ENCODE measurements at regions of chr21 and their contacts with region 1.

Region 1: DNA sequence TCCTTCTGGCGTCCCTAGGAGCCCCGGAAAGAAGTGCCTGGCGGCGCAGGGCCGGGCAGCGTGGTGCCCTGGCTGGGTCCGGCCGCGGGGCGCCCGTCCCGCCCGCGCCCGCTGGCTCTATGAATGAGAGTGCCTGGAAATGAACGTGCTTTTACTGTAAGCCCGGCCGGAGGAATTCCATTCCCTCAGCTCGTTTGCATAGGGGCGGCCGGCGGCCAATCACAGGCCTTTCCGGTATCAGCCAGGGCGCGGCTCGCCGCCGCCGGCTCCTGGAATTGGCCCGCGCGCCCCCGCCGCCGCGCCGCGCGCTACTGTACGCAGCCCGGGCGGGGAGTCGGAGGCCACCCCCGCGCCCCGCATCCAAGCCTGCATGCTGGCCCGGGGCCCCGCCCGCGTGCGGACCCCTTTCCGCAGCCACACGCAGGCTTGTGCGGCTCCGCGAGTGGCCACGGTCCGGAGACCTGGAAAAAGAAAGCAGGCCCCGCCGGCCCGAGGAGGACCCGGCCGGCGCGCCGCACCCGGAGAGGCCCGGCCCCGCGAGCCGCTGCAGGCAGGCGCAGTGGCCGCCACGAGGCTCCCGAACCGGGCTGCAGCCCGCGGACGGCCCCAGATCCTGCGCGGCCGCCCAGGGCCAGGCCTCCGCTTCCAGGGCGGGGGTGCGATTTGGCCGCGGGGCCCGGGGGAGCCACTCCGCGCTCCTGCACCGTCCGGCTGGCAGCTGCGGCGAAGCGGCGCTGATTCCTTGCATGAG is 160.4 kb downstream of the RUNX1 start:
- DNase-seq: peak; percentile 65 to 83 (median 68)
- H3K4me3 ChIP-seq: peak overlapping the region; percentile 52 to 78
- H3K4me3 Mint-ChIP-seq: peak overlapping the region; percentile 90 to 99 (median 95)
- H3K27ac ChIP-seq: peak overlapping the region; percentile 75
- H3K27ac Mint-ChIP-seq: peak overlapping the region; percentile 93 to 100 (median 99)
- H3K4me1 ChIP-seq: peaks cover 69% of the 10 kb centered on the region
- H3K4me1 Mint-ChIP-seq: peaks cover 25 to 68% (median 44%) of the 10 kb centered on the region in 4 donors
- H3K27me3 ChIP-seq: no peaks in the 10 kb centered on the region
- H3K27me3 Mint-ChIP-seq: peaks cover 0 to 1% of the 10 kb centered on the region in 2 donors

Region 2: DNA sequence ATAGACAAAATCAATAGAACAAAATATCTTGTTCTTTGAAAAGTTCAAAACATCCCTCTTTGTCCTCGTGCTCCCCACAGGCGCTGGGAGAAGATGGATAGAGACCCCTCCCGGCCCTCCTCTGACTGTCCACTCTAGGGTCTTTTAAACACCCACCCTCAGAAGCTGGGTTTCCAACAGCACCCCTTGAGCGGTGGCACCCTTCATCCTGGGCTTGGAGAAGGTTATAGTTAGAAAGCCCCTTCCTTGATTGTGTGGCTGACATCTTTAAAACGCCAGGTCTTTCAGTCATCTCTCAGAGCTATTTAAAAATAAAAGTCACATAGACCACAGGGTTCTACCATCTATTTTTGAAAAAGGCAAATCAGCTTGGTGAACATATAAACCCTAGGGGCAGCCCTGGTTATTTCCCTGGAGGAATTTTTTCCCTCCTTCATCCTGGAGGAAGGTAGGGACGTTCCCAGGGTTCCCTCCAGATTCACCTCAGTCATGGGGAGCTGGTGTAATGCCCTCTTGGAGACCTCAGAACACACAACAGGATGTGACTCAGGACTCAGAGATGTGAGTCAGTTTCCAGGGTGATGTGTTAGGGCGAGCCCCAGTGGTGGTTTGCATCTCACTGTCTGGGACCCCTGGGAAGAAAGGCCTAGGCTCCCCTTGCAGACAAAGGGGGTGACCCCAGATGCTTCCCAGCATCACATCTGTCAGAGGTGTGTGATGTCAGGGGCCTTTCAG is 81.4 kb before region 1 on chr21:
- CTCF ChIA-PET with region 1: interaction called, 6 read pairs
- POLR2A ChIA-PET with region 1: interaction called, 10 read pairs
- intact Hi-C with region 1: loop called (anchors 2 kb)
- DNase-seq: peak; percentile 20 to 90 (median 24)
- H3K4me3 ChIP-seq: no peak overlapping the region
- H3K4me3 Mint-ChIP-seq: peak overlapping the region in 4 of 8 donors; percentile 26 to 79 (median 69)
- H3K27ac ChIP-seq: peak overlapping the region; percentile 59
- H3K27ac Mint-ChIP-seq: peak overlapping the region; percentile 75 to 99 (median 91)
- H3K4me1 ChIP-seq: peaks cover 56% of the 10 kb centered on the region
- H3K4me1 Mint-ChIP-seq: peaks cover 61 to 89% (median 73%) of the 10 kb centered on the region in 4 donors
- H3K27me3 ChIP-seq: no peaks in the 10 kb centered on the region
- H3K27me3 Mint-ChIP-seq: no peaks in the 10 kb centered on the region

Region 3: DNA sequence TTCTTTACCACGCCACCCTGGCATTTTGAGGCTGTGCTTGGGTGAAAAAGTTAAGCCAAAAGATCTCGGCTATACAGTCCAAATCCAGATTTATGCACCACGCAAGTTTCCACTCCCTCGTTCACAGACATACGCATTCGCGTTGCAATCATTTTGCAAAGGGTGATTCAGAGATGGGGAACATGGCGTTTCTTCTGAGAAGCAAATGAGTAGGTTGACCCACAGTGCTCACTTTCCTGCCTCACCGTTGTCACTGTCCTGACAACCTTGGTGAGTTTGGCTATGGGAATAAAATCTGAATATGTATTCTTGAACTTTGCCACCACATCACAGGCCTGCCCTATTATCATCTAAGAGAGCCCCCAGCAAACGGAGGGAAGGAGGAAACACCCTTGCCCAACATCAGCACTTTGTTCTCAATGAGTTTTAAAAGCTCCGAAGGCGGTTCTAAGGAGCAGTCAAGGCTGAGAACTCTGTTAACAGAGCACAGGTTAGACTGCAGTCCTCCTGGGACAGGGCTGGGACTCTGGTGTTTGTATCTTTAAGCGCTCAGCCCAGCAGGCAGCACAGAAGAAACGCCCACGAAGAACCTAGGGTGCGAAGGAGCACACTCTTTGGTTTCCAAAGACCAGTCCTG is 74.0 kb after region 1 on chr21:
- CTCF ChIA-PET with region 1: no interaction called
- POLR2A ChIA-PET with region 1: no interaction called
- intact Hi-C with region 1: no loop called
- DNase-seq: no peak
- H3K4me3 ChIP-seq: no peak overlapping the region
- H3K4me3 Mint-ChIP-seq: peak overlapping the region; percentile 31 to 77 (median 67)
- H3K27ac ChIP-seq: no peak overlapping the region
- H3K27ac Mint-ChIP-seq: peak overlapping the region; percentile 64 to 85 (median 77)
- H3K4me1 ChIP-seq: peaks cover 59% of the 10 kb centered on the region
- H3K4me1 Mint-ChIP-seq: peaks cover 65 to 87% (median 78%) of the 10 kb centered on the region in 4 donors
- H3K27me3 ChIP-seq: no peaks in the 10 kb centered on the region
- H3K27me3 Mint-ChIP-seq: no peaks in the 10 kb centered on the region

Region 4: GRCh38 chr21:34974162-34974981 is 85.6 kb after region 1 on chr21:
- CTCF ChIA-PET with region 1: interaction called, 11 read pairs
- POLR2A ChIA-PET with region 1: interaction called, 23 read pairs
- intact Hi-C with region 1: loop called (anchors 2 kb)
- DNase-seq: peak; percentile 74 to 81 (median 79)
- H3K4me3 ChIP-seq: peak overlapping the region in 1 of 2 donors; percentile 21
- H3K4me3 Mint-ChIP-seq: peak overlapping the region; percentile 38 to 92 (median 83)
- H3K27ac ChIP-seq: peak overlapping the region; percentile 37
- H3K27ac Mint-ChIP-seq: peak overlapping the region; percentile 84 to 98 (median 93)
- H3K4me1 ChIP-seq: peaks cover 82% of the 10 kb centered on the region
- H3K4me1 Mint-ChIP-seq: peaks cover 72 to 94% (median 82%) of the 10 kb centered on the region in 4 donors
- H3K27me3 ChIP-seq: no peaks in the 10 kb centered on the region
- H3K27me3 Mint-ChIP-seq: no peaks in the 10 kb centered on the region

Region 5: DNA sequence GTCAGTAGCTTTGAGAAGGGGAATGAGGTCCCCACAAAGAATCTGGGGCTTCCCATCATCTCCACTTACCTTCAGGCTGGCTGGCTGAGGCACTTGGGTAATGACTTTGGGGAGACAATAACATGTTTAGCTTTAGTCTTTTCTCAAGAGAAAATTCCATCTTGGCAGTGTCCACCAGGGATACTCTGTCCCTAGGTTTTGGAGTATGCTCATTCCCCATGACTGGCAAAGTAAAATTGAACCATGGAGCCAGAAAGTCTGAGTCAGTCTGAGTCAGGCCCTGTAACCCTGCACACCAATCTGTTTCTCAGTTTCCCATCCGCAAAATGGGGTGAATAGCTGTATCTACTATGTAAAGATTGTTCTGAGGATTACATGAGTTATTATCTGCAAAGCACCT is 132.2 kb after region 1 on chr21:
- CTCF ChIA-PET with region 1: interaction called, 7 read pairs
- POLR2A ChIA-PET with region 1: interaction called, 90 read pairs
- intact Hi-C with region 1: loop called (anchors 1 kb)
- DNase-seq: no peak
- H3K4me3 ChIP-seq: no peak overlapping the region
- H3K4me3 Mint-ChIP-seq: peak overlapping the region in 4 of 8 donors; percentile 18 to 46 (median 44)
- H3K27ac ChIP-seq: peak overlapping the region; percentile 7
- H3K27ac Mint-ChIP-seq: peak overlapping the region; percentile 73 to 96 (median 82)
- H3K4me1 ChIP-seq: peaks cover 95% of the 10 kb centered on the region
- H3K4me1 Mint-ChIP-seq: peaks cover 74 to 94% (median 83%) of the 10 kb centered on the region in 4 donors
- H3K27me3 ChIP-seq: no peaks in the 10 kb centered on the region
- H3K27me3 Mint-ChIP-seq: no peaks in the 10 kb centered on the region

Region 6: GRCh38 chr21:35036465-35037383 is 148.0 kb after region 1 on chr21:
- CTCF ChIA-PET with region 1: interaction called, 4 read pairs
- POLR2A ChIA-PET with region 1: interaction called, 19 read pairs
- intact Hi-C with region 1: no loop called
- DNase-seq: no peak
- H3K4me3 ChIP-seq: peak overlapping the region; percentile 8 to 18
- H3K4me3 Mint-ChIP-seq: peak overlapping the region in 7 of 8 donors; percentile 71 to 91 (median 81)
- H3K27ac ChIP-seq: peak overlapping the region; percentile 63
- H3K27ac Mint-ChIP-seq: peak overlapping the region; percentile 91 to 97 (median 95)
- H3K4me1 ChIP-seq: peaks cover 99% of the 10 kb centered on the region
- H3K4me1 Mint-ChIP-seq: peaks cover 85 to 100% (median 92%) of the 10 kb centered on the region in 4 donors
- H3K27me3 ChIP-seq: no peaks in the 10 kb centered on the region
- H3K27me3 Mint-ChIP-seq: no peaks in the 10 kb centered on the region

Region 7: GRCh38 chr21:35226948-35227744 is 338.4 kb after region 1 on chr21:
- CTCF ChIA-PET with region 1: interaction called, 5 read pairs
- POLR2A ChIA-PET with region 1: interaction called, 7 read pairs
- intact Hi-C with region 1: loop called (anchors 1 kb)
- DNase-seq: peak; percentile 60 to 79 (median 69)
- H3K4me3 ChIP-seq: peak overlapping the region; percentile 34 to 48
- H3K4me3 Mint-ChIP-seq: peak overlapping the region; percentile 0 to 74 (median 58)
- H3K27ac ChIP-seq: no peak overlapping the region
- H3K27ac Mint-ChIP-seq: peak overlapping the region; percentile 72 to 92 (median 85)
- H3K4me1 ChIP-seq: peaks cover 37% of the 10 kb centered on the region
- H3K4me1 Mint-ChIP-seq: peaks cover 26 to 46% (median 36%) of the 10 kb centered on the region in 4 donors
- H3K27me3 ChIP-seq: no peaks in the 10 kb centered on the region
- H3K27me3 Mint-ChIP-seq: no peaks in the 10 kb centered on the region